OCI-LY7 (cell line): ENCODE measurements at regions of chr1 and their contacts with region 1.

Region 1: GRCh38 chr1:163561580-163562295 is 240.0 kb downstream of the NUF2 start:
- DNase-seq: peak; percentile 2
- H3K4me3 ChIP-seq: no peak overlapping the region
- H3K27ac ChIP-seq: no peak overlapping the region
- H3K4me1 ChIP-seq: no peaks in the 10 kb centered on the region
- CTCF ChIP-seq: peak; percentile 65

Region 2: GRCh38 chr1:163442920-163443319 is 118.8 kb before region 1 on chr1:
- CTCF ChIA-PET with region 1: no interaction called
- POLR2A ChIA-PET with region 1: no interaction called
- intact Hi-C with region 1: no loop called
- DNase-seq: no peak
- H3K4me3 ChIP-seq: no peak overlapping the region
- H3K27ac ChIP-seq: no peak overlapping the region
- H3K4me1 ChIP-seq: no peaks in the 10 kb centered on the region
- CTCF ChIP-seq: no peak

Region 3: GRCh38 chr1:163596541-163597258 is 35.0 kb after region 1 on chr1:
- CTCF ChIA-PET with region 1: no interaction called
- POLR2A ChIA-PET with region 1: no interaction called
- intact Hi-C with region 1: no loop called
- DNase-seq: peak; percentile 73
- H3K4me3 ChIP-seq: peak overlapping the region; percentile 38
- H3K27ac ChIP-seq: peak overlapping the region; percentile 58
- H3K4me1 ChIP-seq: peaks cover 18% of the 10 kb centered on the region
- CTCF ChIP-seq: no peak

Region 4: GRCh38 chr1:163608979-163609378 is 47.2 kb after region 1 on chr1:
- CTCF ChIA-PET with region 1: no interaction called
- POLR2A ChIA-PET with region 1: no interaction called
- intact Hi-C with region 1: no loop called
- DNase-seq: no peak
- H3K4me3 ChIP-seq: no peak overlapping the region
- H3K27ac ChIP-seq: no peak overlapping the region
- H3K4me1 ChIP-seq: no peaks in the 10 kb centered on the region
- CTCF ChIP-seq: no peak

Region 5: GRCh38 chr1:163697137-163697536 is 135.4 kb after region 1 on chr1:
- CTCF ChIA-PET with region 1: no interaction called
- POLR2A ChIA-PET with region 1: no interaction called
- intact Hi-C with region 1: loop called (anchors 5 kb)
- DNase-seq: no peak
- H3K4me3 ChIP-seq: no peak overlapping the region
- H3K27ac ChIP-seq: no peak overlapping the region
- H3K4me1 ChIP-seq: no peaks in the 10 kb centered on the region
- CTCF ChIP-seq: no peak

Region 6: DNA sequence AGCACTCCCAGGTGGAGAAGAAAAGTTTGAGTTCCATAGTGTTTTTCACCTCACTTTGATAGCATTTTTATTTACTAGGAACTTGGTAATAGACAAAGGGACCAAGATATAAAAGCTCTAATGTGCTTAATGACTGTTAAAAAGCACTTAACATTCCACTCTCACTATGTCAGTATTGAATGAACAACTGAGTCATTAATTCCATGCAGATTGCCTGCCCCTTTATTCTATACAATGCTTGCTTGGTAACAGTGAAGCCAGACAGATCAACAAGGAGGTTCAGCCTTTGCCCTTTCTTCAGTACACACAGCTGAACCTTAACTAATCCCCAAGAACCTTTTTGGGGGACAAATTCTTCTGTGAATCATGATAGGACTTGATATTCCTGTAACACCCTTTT is 185.5 kb after region 1 on chr1:
- CTCF ChIA-PET with region 1: no interaction called
- POLR2A ChIA-PET with region 1: no interaction called
- intact Hi-C with region 1: loop called (anchors 10 kb)
- DNase-seq: no peak
- H3K4me3 ChIP-seq: no peak overlapping the region
- H3K27ac ChIP-seq: no peak overlapping the region
- H3K4me1 ChIP-seq: no peaks in the 10 kb centered on the region
- CTCF ChIP-seq: no peak